Activated naive CD4-positive, alpha-beta T cell treated with anti-CD3 and anti-CD28 coated beads, Interleukin-2, amount 10 ng/mL, durations not matched to agents 7 days and 5 days (primary cell): ENCODE measurements at regions of chr12 and their contacts with region 1.

Region 1: GRCh38 chr12:56117778-56118687 is at the start of gene ZC3H10:
- DNase-seq: peak; percentile 99
- H3K4me3 Mint-ChIP-seq: peak within 1 kb of the TSS; percentile 94
- H3K27ac Mint-ChIP-seq: peak within 1 kb of the TSS; percentile 97
- H3K4me1 Mint-ChIP-seq: peaks cover 46% of the 10 kb centered on the region
- H3K27me3 Mint-ChIP-seq: no peaks in the 10 kb centered on the region

Region 2: GRCh38 chr12:56041552-56042429 is 76.2 kb before region 1 on chr12 and contains the start of gene RPS26:
- CTCF ChIA-PET with region 1: interaction called, 34 read pairs
- DNase-seq: peak; percentile 95
- H3K4me3 Mint-ChIP-seq: peak within 1 kb of the TSS; percentile 92
- H3K27ac Mint-ChIP-seq: peak within 1 kb of the TSS; percentile 91
- H3K4me1 Mint-ChIP-seq: peaks cover 54% of the 10 kb centered on the region
- H3K27me3 Mint-ChIP-seq: peaks cover 3% of the 10 kb centered on the region

Region 3: DNA sequence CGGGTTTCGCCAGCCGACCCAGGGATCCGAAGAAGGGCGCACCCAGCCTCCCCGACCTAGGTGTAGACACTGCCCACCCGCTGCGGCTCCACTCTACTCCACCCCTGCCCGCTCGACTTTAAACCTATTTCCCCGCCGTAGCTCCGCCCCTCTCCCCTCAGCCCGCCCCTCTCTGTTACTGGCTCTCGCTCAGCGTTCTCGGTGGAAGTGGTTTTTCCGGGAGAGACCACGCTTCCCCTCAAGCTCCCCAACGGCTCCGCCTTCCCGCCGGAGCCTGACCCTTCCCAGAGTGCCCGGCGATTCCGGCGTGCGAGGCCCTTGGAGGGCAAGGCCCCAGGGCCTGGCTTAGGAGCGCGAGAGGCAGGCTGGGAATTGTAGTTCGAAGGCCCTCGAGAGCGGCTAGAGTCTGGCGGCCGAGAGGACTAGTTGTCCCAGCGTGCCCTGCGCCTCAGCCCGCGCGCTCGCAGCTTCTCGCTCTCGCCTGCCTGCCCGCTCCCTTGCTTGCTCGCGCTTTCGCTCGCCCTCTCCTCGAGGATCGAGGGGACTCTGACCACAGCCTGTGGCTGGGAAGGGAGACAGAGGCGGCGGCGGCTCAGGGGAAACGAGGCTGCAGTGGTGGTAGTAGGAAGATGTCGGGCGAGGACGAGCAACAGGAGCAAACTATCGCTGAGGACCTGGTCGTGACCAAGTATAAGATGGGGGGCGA is 13.8 kb before region 1 on chr12 and contains the start of gene PA2G4:
- CTCF ChIA-PET with region 1: interaction called, 15 read pairs
- DNase-seq: peak; percentile 99
- H3K4me3 Mint-ChIP-seq: peak within 1 kb of the TSS; percentile 97
- H3K27ac Mint-ChIP-seq: peak within 1 kb of the TSS; percentile 99
- H3K4me1 Mint-ChIP-seq: peaks cover 59% of the 10 kb centered on the region
- H3K27me3 Mint-ChIP-seq: peaks cover 6% of the 10 kb centered on the region

Region 4: GRCh38 chr12:56158029-56158925 is 40.2 kb after region 1 on chr12 and contains the start of gene MYL6:
- CTCF ChIA-PET with region 1: interaction called, 16 read pairs
- DNase-seq: peak; percentile 97
- H3K4me3 Mint-ChIP-seq: peak within 1 kb of the TSS; percentile 95
- H3K27ac Mint-ChIP-seq: peak within 1 kb of the TSS; percentile 94
- H3K4me1 Mint-ChIP-seq: peaks cover 51% of the 10 kb centered on the region
- H3K27me3 Mint-ChIP-seq: no peaks in the 10 kb centered on the region

Region 5: GRCh38 chr12:56221527-56222387 is 103.7 kb after region 1 on chr12 and contains the start of gene RNF41:
- CTCF ChIA-PET with region 1: interaction called, 15 read pairs
- DNase-seq: peak; percentile 95
- H3K4me3 Mint-ChIP-seq: peak within 1 kb of the TSS; percentile 99
- H3K27ac Mint-ChIP-seq: peak within 1 kb of the TSS; percentile 93
- H3K4me1 Mint-ChIP-seq: peaks cover 53% of the 10 kb centered on the region
- H3K27me3 Mint-ChIP-seq: no peaks in the 10 kb centered on the region